H1 (cell line): ENCODE measurements at regions of chr15 and their contacts with region 1.

Region 1: GRCh38 chr15:40274350-40275274 is 8.3 kb downstream of the ANKRD63 start:
- DNase-seq: peak; percentile 70 to 97
- H3K4me3 ChIP-seq: no peak overlapping the region
- H3K27ac ChIP-seq: no peak overlapping the region
- H3K4me1 ChIP-seq: peaks cover 0 to 2% (median 1%) of the 10 kb centered on the region in 4 experiments; a peak in 5 of 7 replicates
- H3K27me3 ChIP-seq: peaks cover 0 to 8% (median under 1%) of the 10 kb centered on the region in 4 experiments; a peak in 3 of 7 replicates
- CTCF ChIP-seq: peak; percentile 100
- EP300 ChIP-seq: no peak
- POLR2A ChIP-seq: no peak
- RAD21 ChIP-seq: peak; percentile 92 to 97

Region 2: GRCh38 chr15:40054605-40055545 is 219.7 kb before region 1 on chr15:
- CTCF ChIA-PET with region 1: interaction called, 33 read pairs
- POLR2A ChIA-PET with region 1: no interaction called
- DNase-seq: no peak
- H3K4me3 ChIP-seq: no peak overlapping the region
- H3K27ac ChIP-seq: no peak overlapping the region
- H3K4me1 ChIP-seq: peaks cover 3 to 13% (median 5%) of the 10 kb centered on the region in 4 experiments
- H3K27me3 ChIP-seq: no peaks in the 10 kb centered on the region
- CTCF ChIP-seq: no peak
- EP300 ChIP-seq: no peak
- POLR2A ChIP-seq: no peak
- RAD21 ChIP-seq: no peak

Region 3: GRCh38 chr15:40080847-40081246 is 193.8 kb before region 1 on chr15:
- CTCF ChIA-PET with region 1: no interaction called
- POLR2A ChIA-PET with region 1: no interaction called
- DNase-seq: no peak
- H3K4me3 ChIP-seq: no peak overlapping the region
- H3K27ac ChIP-seq: no peak overlapping the region
- H3K4me1 ChIP-seq: peaks cover 0 to 11% (median 8%) of the 10 kb centered on the region in 4 experiments; a peak in 6 of 7 replicates
- H3K27me3 ChIP-seq: peaks cover 0 to 12% (median 7%) of the 10 kb centered on the region in 4 experiments; a peak in 4 of 7 replicates
- CTCF ChIP-seq: no peak
- EP300 ChIP-seq: no peak
- POLR2A ChIP-seq: no peak
- RAD21 ChIP-seq: no peak

Region 4: GRCh38 chr15:40155270-40155910 is 119.2 kb before region 1 on chr15:
- CTCF ChIA-PET with region 1: interaction called, 12 read pairs
- POLR2A ChIA-PET with region 1: no interaction called
- DNase-seq: peak; percentile 73 to 79
- H3K4me3 ChIP-seq: peak overlapping the region in 3 of 4 experiments; percentile 16 to 40 (median 30); a peak in 4 of 8 replicates
- H3K27ac ChIP-seq: peak overlapping the region; percentile 28; the same call in 1 of the 2 replicates
- H3K4me1 ChIP-seq: peaks cover 9 to 20% (median 19%) of the 10 kb centered on the region in 4 experiments
- H3K27me3 ChIP-seq: no peaks in the 10 kb centered on the region
- CTCF ChIP-seq: no peak
- EP300 ChIP-seq: no peak; a peak in 1 of 3 replicates
- POLR2A ChIP-seq: peak in 1 of 2 experiments; percentile 45; a peak in 1 of 3 replicates
- RAD21 ChIP-seq: no peak; a peak in 1 of 4 replicates

Region 5: GRCh38 chr15:40217159-40217824 is 57.3 kb before region 1 on chr15:
- CTCF ChIA-PET with region 1: interaction called, 538 read pairs
- POLR2A ChIA-PET with region 1: interaction called, 3 read pairs
- DNase-seq: no peak
- H3K4me3 ChIP-seq: no peak overlapping the region
- H3K27ac ChIP-seq: no peak overlapping the region
- H3K4me1 ChIP-seq: no peaks in the 10 kb centered on the region
- H3K27me3 ChIP-seq: no peaks in the 10 kb centered on the region
- CTCF ChIP-seq: peak; percentile 28 to 89 (median 78)
- EP300 ChIP-seq: no peak
- POLR2A ChIP-seq: no peak
- RAD21 ChIP-seq: peak; percentile 89 to 93

Region 6: GRCh38 chr15:40290918-40291574 is 16.4 kb after region 1 on chr15:
- CTCF ChIA-PET with region 1: interaction called, 217 read pairs
- POLR2A ChIA-PET with region 1: interaction called, 21 read pairs
- DNase-seq: peak in 1 of 2 experiments; percentile 80
- H3K4me3 ChIP-seq: peak overlapping the region; percentile 12 to 54 (median 18); a peak in 5 of 8 replicates
- H3K27ac ChIP-seq: no peak overlapping the region
- H3K4me1 ChIP-seq: peaks cover 0 to 28% (median 14%) of the 10 kb centered on the region in 4 experiments; a peak in 6 of 7 replicates
- H3K27me3 ChIP-seq: peaks cover 16 to 52% (median 36%) of the 10 kb centered on the region in 4 experiments; a peak in 6 of 7 replicates
- CTCF ChIP-seq: no peak
- EP300 ChIP-seq: no peak
- POLR2A ChIP-seq: no peak
- RAD21 ChIP-seq: no peak

Region 7: GRCh38 chr15:40323239-40323952 is 48.8 kb after region 1 on chr15 and contains the start of gene INAFM2:
- CTCF ChIA-PET with region 1: interaction called, 531 read pairs
- POLR2A ChIA-PET with region 1: interaction called, 4 read pairs
- DNase-seq: peak; percentile 90 to 92
- H3K4me3 ChIP-seq: peak within 1 kb of the TSS; percentile 62 to 79 (median 70)
- H3K27ac ChIP-seq: no peak within 1 kb of the TSS
- H3K4me1 ChIP-seq: peaks cover 21 to 44% (median 31%) of the 10 kb centered on the region in 4 experiments
- H3K27me3 ChIP-seq: peaks cover 0 to 20% (median 9%) of the 10 kb centered on the region in 4 experiments; a peak in 4 of 7 replicates
- CTCF ChIP-seq: peak; percentile 22 to 36 (median 30)
- EP300 ChIP-seq: peak in 1 of 2 experiments; percentile 58; a peak in 1 of 3 replicates
- POLR2A ChIP-seq: peak in 1 of 2 experiments; percentile 49; a peak in 1 of 3 replicates
- RAD21 ChIP-seq: peak in 1 of 2 experiments; percentile 20; a peak in 1 of 4 replicates
- total RNA-seq, gene INAFM2: 35.1 and 38.2 TPM in 2 replicates